Left colon (tissue), 2 donors: ENCODE measurements at regions of chrX and their contacts with region 1.

Region 1: GRCh38 chrX:17788439-17788838 is 51.1 kb downstream of the SCML1 start:
- DNase-seq: peak in 1 of 2 donors; percentile 17
- ATAC-seq: peak; percentile 69

Region 2: DNA sequence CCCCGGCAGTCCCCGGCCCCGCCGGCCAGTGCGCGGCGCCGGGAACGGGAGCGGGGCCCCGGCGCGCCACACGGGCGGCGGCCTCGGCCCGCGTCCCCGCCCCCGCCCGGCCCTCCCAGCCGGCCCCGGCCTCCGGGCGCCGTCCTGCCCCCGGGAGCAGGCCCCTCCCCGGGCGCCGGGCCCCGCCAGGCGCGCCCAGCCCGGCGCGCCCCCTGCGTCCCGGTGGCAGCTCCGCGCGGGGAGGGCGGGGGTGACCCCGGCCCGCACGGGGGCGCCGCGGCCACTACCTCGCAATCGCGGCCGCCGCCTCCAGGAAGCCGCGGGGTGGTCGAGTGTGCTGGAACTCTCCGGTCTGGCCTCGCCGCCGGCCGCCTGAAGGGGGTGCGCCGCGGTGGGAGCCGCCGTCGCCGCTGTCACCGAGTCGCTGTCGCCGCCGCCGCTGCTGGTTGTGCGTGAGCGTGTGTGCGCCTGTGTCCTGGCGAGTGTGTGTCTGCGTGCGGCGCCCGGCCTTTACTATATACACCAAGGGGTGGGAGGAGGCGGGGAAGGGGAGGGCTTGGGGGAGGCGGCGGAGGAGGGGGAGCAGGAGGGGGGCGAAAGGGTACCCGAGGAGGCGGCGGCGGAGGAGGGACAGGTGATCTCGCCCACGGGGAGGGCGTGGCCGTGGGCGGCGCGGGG is 72.5 kb after region 1 on chrX and contains the start of gene RAI2:
- intact Hi-C with region 1: no loop called
- DNase-seq: peak in 1 of 2 donors; percentile 17
- ATAC-seq: peak; percentile 57
- total RNA-seq, gene RAI2: 3.5 to 6.5 TPM

Region 3: DNA sequence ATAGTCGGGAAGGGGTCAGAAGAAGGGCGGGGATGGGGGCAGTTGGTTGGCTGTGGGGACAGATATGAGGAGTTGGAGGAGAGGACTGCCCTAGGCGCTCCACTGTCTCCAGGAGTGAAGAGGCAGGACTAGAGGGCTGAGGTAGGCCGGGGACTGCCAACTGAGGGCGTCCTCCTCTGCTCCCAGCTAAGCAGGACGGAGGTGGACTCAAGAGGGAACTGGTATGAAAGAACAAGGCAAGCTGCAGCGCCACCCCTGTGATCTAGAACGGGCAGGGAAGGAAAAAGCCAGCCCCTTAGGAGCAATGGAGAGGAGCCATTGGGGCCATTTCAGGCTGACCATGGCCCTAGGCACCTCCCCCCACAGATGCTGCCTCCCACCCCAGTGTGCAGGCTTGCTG is 418.2 kb after region 1 on chrX:
- intact Hi-C with region 1: loop called in 1 of 2 experiments (anchors 5 kb)
- DNase-seq: no peak
- ATAC-seq: no peak